Spleen (tissue), 13 donors: ENCODE measurements at regions of chr22 and their contacts with region 1.

Region 1: DNA sequence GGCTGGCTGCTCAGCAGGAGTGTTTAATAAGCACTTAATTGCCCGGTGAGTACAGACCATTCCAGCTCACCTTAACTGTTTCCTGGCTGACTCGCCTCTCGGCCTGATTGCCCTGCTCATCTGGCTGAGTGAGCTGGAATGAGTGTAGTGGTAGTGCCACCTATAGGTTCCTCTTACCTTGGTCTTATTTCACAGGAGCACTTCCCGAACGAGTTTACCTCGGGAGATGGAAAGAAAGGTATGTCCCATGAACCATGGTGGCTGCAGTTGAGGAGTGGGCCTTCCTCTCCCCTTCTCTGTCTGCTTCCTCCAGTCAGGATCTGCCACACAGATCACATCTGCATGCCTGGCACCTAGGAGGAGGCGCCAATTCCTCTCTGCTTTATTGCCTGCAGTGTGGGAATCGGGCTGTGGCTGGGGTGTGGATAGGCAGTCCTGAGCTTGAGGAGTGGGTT is 26.7 kb downstream of the UPB1 start:
- DNase-seq: no peak
- H3K4me3 ChIP-seq: no peak overlapping the region
- H3K27ac ChIP-seq: peak overlapping the region in 1 of 8 donors; percentile 37
- H3K4me1 ChIP-seq: peaks cover 5 to 50% (median 28%) of the 10 kb centered on the region in 6 donors
- H3K27me3 ChIP-seq: no peaks in the 10 kb centered on the region
- CTCF ChIP-seq: peak in 9 of 11 experiments; percentile 10 to 66 (median 46)
- POLR2A ChIP-seq: no peak

Region 2: GRCh38 chr22:24325105-24325757 is 196.6 kb before region 1 on chr22:
- intact Hi-C with region 1: loop called (anchors 5 kb)
- DNase-seq: no peak
- H3K4me3 ChIP-seq: no peak overlapping the region
- H3K27ac ChIP-seq: peak overlapping the region in 1 of 8 donors; percentile 17
- H3K4me1 ChIP-seq: peaks cover 6 to 29% (median 16%) of the 10 kb centered on the region in 6 donors
- H3K27me3 ChIP-seq: no peaks in the 10 kb centered on the region
- CTCF ChIP-seq: peak; percentile 36 to 82 (median 63)
- POLR2A ChIP-seq: no peak